ENCODE measurements at regions of chr16 and their contacts with region 1.

Region 1: DNA sequence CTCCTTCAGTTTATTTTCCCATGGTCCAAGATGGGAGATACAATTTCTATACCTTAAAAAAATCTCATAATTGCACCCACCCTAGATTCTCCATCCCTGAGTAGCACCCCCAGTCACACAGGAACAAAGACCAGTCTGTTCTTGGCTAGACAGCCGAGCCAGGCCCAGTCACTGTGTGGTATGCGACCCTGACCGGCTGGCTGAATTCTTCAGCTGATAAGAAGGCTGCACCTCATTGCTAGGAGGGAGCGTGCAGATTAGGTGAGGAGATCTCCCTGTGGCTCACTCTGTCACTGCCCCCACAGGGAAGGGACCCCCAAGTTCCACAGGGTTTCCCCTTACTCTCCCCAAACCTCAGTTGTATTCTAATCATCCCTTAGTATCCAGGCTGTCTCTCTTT is 138.7 kb downstream of the SALL1 start:
- DNase-seq: no peak
- H3K4me3 ChIP-seq: no peak overlapping the region
- H3K27ac ChIP-seq: no peak overlapping the region
- H3K4me1 ChIP-seq: no peaks in the 10 kb centered on the region
- H3K27me3 ChIP-seq: no peaks in the 10 kb centered on the region
- CTCF ChIP-seq: no peak
- POLR2A ChIP-seq: no peak

Region 2: GRCh38 chr16:50946606-50947005 is 65.8 kb before region 1 on chr16:
- intact Hi-C with region 1: loop called (anchors 2 kb)
- DNase-seq: no peak
- H3K4me3 ChIP-seq: no peak overlapping the region
- H3K27ac ChIP-seq: no peak overlapping the region
- H3K4me1 ChIP-seq: no peaks in the 10 kb centered on the region
- H3K27me3 ChIP-seq: no peaks in the 10 kb centered on the region
- CTCF ChIP-seq: no peak
- POLR2A ChIP-seq: no peak